Posterior vena cava (tissue), 2 donors: ENCODE measurements at regions of chr16 and their contacts with region 1.

Region 1: GRCh38 chr16:4131621-4132020 is 15.4 kb upstream of the ADCY9 start:
- DNase-seq: no peak

Region 2: DNA sequence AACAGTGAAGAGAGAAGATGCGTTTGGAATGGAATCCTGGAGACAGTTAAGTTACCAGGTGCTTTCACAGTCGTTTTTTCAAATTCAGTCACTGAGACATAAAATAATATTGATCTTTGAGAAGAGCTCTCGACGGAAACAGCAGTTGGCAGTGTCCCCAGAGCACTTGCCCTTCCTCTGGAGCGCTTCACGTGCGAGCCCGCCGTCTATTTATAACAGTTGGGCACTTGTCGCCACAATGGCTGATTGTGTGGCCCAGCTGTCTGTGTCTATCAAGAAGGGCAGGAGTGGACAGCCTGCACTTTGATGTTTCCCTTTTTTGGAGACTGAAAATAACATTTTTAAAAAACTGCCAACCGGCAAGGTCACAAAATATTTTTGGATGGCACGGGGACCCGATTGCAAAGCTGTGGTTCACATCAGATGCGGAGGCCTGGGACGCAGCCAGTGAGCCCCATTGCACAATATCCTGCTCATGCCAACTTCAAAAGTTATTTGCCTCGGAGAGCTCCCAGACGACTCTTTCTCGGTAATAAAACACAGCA is 78.2 kb before region 1 on chr16:
- intact Hi-C with region 1: loop called in 1 of 2 experiments (anchors 2 kb)
- DNase-seq: peak; percentile 87

Region 3: DNA sequence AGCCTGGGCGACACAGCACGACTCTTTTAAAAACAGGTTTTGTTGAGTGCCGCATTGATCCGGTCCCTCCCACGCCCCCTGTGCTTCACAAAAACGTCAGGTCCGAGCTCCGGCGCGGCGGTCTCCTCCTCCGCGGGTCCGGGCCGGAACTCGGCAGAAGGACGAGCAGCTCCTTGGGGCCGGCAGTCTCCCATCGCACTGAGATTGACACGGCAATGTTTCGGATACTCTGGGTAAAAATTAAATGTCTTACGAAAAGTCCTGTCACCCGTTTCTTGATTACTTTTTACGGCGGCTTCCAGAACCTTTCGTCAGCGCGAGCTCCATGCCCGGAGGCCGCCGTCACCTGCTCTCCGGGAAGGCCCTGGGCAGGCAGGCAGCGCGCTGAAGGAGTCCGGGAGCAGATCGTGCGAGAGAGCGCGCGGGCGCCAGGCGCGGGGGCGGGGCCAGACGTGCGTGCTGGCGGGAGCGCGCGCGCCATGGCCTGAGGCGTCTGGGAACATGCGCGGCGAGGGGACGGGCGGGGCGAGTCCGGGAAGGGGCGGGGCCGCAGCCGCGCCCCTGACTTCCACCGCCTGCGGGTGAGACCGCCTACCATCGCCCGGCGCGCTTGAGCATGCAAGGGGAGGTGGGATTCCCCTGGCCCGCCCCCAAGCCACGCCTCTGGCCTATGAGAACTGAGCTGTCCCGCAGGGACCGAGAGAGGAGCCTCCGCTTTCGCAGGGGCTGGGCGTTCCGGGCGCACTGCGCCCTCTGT is 122.0 kb after region 1 on chr16:
- intact Hi-C with region 1: no loop called
- DNase-seq: peak; percentile 100